ENCODE measurements at regions of chr19 and their contacts with region 1.

Region 1: GRCh38 chr19:51097166-51097738 is 11.0 kb downstream of the CTU1 start:
- DNase-seq: peak; percentile 72
- ATAC-seq: peak; percentile 62
- H3K4me3 Mint-ChIP-seq: no peak overlapping the region
- H3K27ac Mint-ChIP-seq: peak overlapping the region; percentile 85
- H3K4me1 Mint-ChIP-seq: peaks cover 15% of the 10 kb centered on the region
- H3K27me3 Mint-ChIP-seq: no peaks in the 10 kb centered on the region

Region 2: DNA sequence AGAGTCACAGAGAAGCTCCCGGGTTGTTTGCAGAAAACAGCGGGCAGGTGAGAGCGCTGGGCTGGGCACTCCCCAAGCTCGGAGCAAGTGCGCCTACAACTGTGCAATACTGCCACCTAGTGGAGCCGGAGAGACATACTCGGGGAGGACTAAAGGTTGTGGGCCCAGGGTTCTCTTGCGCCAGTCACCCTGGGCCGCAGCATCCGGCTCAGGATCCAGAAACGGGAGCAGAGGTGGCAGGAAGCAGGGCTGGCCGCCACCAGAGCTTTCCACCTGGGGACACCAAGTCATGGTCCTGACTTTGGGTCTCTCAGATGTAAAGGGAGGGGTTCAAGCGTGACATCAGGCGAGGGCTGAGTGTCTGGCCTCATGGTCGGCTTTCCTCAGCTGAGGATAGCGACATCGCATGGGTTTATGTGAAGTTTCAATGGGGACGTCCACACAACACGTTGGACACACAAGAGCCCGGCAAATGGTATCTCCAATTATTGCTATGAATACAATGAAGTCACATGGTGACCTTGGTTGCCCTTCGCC is 174.9 kb before region 1 on chr19:
- CTCF ChIA-PET with region 1: interaction called, 13 read pairs
- POLR2A ChIA-PET with region 1: no interaction called
- DNase-seq: peak; percentile 89
- ATAC-seq: peak; percentile 100
- H3K4me3 Mint-ChIP-seq: no peak overlapping the region
- H3K27ac Mint-ChIP-seq: no peak overlapping the region
- H3K4me1 Mint-ChIP-seq: peaks cover 13% of the 10 kb centered on the region
- H3K27me3 Mint-ChIP-seq: peaks cover 20% of the 10 kb centered on the region

Region 3: DNA sequence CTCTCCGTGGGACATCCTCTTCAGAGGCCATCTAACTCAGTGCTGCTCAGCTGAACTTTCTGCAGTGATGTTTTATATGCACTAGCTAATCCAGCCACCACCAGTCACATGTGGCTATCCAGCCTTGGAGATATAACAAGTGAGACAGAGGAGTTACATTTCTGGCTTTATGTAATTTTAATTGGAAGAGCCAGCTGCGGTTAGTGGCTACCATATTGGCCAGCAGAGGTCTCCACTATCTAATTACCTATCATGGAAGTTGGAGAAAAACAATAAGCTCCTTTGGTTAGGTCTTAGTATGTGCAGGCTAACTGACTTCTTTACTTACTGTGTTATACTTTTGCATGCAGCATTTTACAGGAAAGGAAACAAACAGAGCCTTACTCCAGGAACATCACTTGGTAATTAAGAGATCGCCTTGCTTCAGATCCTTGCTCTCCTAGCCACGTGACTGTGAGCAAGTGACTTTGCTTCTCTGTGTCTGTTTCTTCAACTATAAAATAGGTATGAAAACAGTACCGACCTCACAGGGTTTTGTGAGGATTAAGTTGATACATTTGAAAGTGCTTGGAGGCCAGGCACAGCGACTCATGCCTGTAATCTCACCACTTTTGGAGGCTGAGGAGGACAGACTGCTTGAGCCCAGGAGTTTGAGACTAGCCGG is 76.1 kb before region 1 on chr19:
- CTCF ChIA-PET with region 1: interaction called, 10 read pairs
- POLR2A ChIA-PET with region 1: no interaction called
- DNase-seq: peak; percentile 35
- ATAC-seq: no peak
- H3K4me3 Mint-ChIP-seq: no peak overlapping the region
- H3K27ac Mint-ChIP-seq: no peak overlapping the region
- H3K4me1 Mint-ChIP-seq: peaks cover 19% of the 10 kb centered on the region
- H3K27me3 Mint-ChIP-seq: peaks cover 49% of the 10 kb centered on the region